K562 (cell line): ENCODE measurements at regions of chr6 and their contacts with region 1.

Region 1: GRCh38 chr6:68226460-68226859 is 408.6 kb upstream of the ADGRB3 start:
- DNase-seq: peak in 2 of 4 experiments; percentile 24 to 68
- ATAC-seq: peak; percentile 71
- H3K4me3 ChIP-seq: no peak overlapping the region
- H3K27ac ChIP-seq: no peak overlapping the region
- H3K4me1 ChIP-seq: 0 out of 5 replicates have a peak, but pooled peaks cover 0 to 3% of the 10 kb centered on the region in 2 experiments
- H3K27me3 ChIP-seq: no peaks in the 10 kb centered on the region
- CTCF ChIP-seq: peak; percentile 19 to 59 (median 48); a peak in 4 of 6 replicates
- EP300 ChIP-seq: no peak
- POLR2A ChIP-seq: no peak
- RAD21 ChIP-seq: peak; percentile 68 to 89

Region 2: GRCh38 chr6:66662196-66662595 is 1564.3 kb before region 1 on chr6:
- CTCF ChIA-PET with region 1: no interaction called
- POLR2A ChIA-PET with region 1: no interaction called
- in situ Hi-C with region 1: no loop called
- intact Hi-C with region 1: loop called (anchors 5 kb)
- DNase-seq: peak in 1 of 4 experiments; percentile 0
- ATAC-seq: no peak
- H3K4me3 ChIP-seq: no peak overlapping the region
- H3K27ac ChIP-seq: no peak overlapping the region
- H3K4me1 ChIP-seq: no peaks in the 10 kb centered on the region
- H3K27me3 ChIP-seq: no peaks in the 10 kb centered on the region
- CTCF ChIP-seq: peak in 1 of 3 experiments; percentile 5; a peak in 1 of 6 replicates
- EP300 ChIP-seq: no peak
- POLR2A ChIP-seq: no peak
- RAD21 ChIP-seq: 0 out of 4 replicates have a peak, but pooled peaks of 1 of the 2 experiments have one; percentile 3

Region 3: GRCh38 chr6:66926065-66926464 is 1300.4 kb before region 1 on chr6:
- CTCF ChIA-PET with region 1: no interaction called
- POLR2A ChIA-PET with region 1: no interaction called
- in situ Hi-C with region 1: no loop called
- intact Hi-C with region 1: loop called (anchors 10 kb)
- DNase-seq: peak; percentile 9 to 68 (median 16)
- ATAC-seq: peak; percentile 86
- H3K4me3 ChIP-seq: no peak overlapping the region
- H3K27ac ChIP-seq: no peak overlapping the region
- H3K4me1 ChIP-seq: no peaks in the 10 kb centered on the region
- H3K27me3 ChIP-seq: no peaks in the 10 kb centered on the region
- CTCF ChIP-seq: peak; percentile 47 to 68 (median 59)
- EP300 ChIP-seq: no peak
- POLR2A ChIP-seq: no peak
- RAD21 ChIP-seq: peak; percentile 79 to 85

Region 4: DNA sequence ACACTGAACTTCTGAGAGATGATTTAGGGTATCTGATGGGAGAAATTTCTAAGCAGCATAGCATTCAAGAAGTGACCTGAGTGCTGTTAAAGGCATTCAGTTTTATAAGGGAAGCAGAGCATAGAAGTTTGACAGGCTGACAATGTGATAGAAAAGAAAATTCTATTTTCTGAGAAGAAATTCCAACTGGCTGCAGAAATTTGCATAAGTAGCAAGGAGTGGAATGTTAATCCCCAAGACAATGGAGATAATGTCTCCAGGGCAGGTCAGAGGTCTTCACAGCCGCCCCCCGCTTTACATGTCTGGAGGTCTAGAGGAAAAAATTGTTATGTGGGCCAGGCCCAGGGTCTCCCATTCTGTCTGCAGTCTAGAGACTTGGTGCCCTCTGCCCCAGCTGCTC is 1157.7 kb before region 1 on chr6:
- CTCF ChIA-PET with region 1: no interaction called
- POLR2A ChIA-PET with region 1: no interaction called
- in situ Hi-C with region 1: no loop called
- intact Hi-C with region 1: loop called (anchors 2 kb)
- DNase-seq: no peak
- ATAC-seq: no peak
- H3K4me3 ChIP-seq: no peak overlapping the region
- H3K27ac ChIP-seq: no peak overlapping the region
- H3K4me1 ChIP-seq: no peaks in the 10 kb centered on the region
- H3K27me3 ChIP-seq: no peaks in the 10 kb centered on the region
- CTCF ChIP-seq: no peak
- EP300 ChIP-seq: no peak
- POLR2A ChIP-seq: no peak
- RAD21 ChIP-seq: no peak